Natural killer cell (primary cell): ENCODE measurements at regions of chrX and their contacts with region 1.

Region 1: GRCh38 chrX:132757066-132757623 is 201.3 kb downstream of the HS6ST2 start:
- DNase-seq: no peak
- ATAC-seq: no peak
- H3K4me3 ChIP-seq: no peak overlapping the region
- H3K4me3 Mint-ChIP-seq: no peak overlapping the region
- H3K27ac ChIP-seq: no peak overlapping the region
- H3K27ac Mint-ChIP-seq: peak overlapping the region in 1 of 2 donors; percentile 8
- H3K4me1 ChIP-seq: peaks cover 4% of the 10 kb centered on the region
- H3K4me1 Mint-ChIP-seq: peaks cover 5 to 13% of the 10 kb centered on the region in 2 donors
- H3K27me3 ChIP-seq: no peaks in the 10 kb centered on the region
- H3K27me3 Mint-ChIP-seq: peaks cover 10 to 69% of the 10 kb centered on the region in 2 donors
- CTCF ChIP-seq: no peak

Region 2: DNA sequence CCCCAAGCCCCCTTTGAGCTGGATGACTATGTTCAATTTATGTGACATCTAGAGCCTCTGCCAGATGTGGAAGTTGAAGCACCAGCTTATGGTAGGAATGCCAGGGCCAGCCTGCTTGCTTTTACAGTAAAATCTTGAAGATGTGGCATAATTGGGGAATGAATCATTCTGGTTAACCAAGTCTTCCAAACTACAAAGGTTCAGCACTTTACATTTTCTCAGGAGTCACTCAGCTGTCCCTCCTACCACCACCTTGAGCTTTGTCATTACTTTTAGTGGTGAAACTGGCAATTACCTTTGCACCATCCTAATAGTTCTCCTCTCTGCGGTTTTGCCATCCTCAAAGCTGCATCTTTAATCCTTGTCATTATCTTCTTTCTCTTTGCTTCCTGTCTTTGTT is 29.1 kb after region 1 on chrX:
- intact Hi-C with region 1: loop called (anchors 1 kb)
- DNase-seq: no peak
- ATAC-seq: no peak
- H3K4me3 ChIP-seq: no peak overlapping the region
- H3K4me3 Mint-ChIP-seq: no peak overlapping the region
- H3K27ac ChIP-seq: no peak overlapping the region
- H3K27ac Mint-ChIP-seq: no peak overlapping the region
- H3K4me1 ChIP-seq: no peaks in the 10 kb centered on the region
- H3K4me1 Mint-ChIP-seq: no peaks in the 10 kb centered on the region
- H3K27me3 ChIP-seq: no peaks in the 10 kb centered on the region
- H3K27me3 Mint-ChIP-seq: peaks cover 3 to 21% of the 10 kb centered on the region in 2 donors
- CTCF ChIP-seq: no peak